ENCODE measurements at regions of chr7 and their contacts with region 1.

Region 1: GRCh38 chr7:87231256-87231655 is 11.7 kb upstream of the TMEM243 start:
- DNase-seq: peak; percentile 21 to 89 (median 45)

Region 2: DNA sequence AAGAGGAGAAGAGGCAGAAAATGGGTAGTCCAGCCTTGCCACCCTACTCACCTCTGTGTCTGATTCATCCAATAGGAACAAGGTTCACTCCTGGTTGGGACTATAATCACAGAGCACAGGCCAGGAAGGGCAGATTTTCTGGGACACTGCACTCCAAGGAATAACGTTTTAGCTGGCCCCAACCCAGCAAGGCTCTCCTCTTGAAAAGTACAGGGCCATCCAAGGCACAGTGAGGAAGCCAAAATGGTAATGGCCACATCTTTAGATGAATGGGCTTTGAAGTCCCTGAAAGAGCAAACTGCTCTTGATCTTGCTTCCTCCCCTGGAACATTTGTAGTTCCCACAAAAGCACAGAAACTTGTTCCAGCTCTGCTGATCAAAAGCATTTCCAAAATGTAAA is 438.1 kb before region 1 on chr7:
- intact Hi-C with region 1: no loop called
- DNase-seq: peak in 1 of 10 donors; percentile 67

Region 3: GRCh38 chr7:86926732-86927131 is 304.5 kb before region 1 on chr7:
- intact Hi-C with region 1: loop called (anchors 5 kb)
- DNase-seq: peak in 2 of 10 donors; percentile 21 to 37

Region 4: GRCh38 chr7:87199700-87200450 is 31.4 kb before region 1 on chr7:
- intact Hi-C with region 1: no loop called
- DNase-seq: no peak